ENCODE measurements at regions of chr7 and their contacts with region 1.

Region 1: GRCh38 chr7:85750454-85750949 is 563.6 kb upstream of the SEMA3D start:
- DNase-seq: peak in 1 of 9 donors; percentile 30
- ATAC-seq: peak; percentile 67
- H3K4me3 ChIP-seq: no peak overlapping the region
- H3K4me3 Mint-ChIP-seq: no peak overlapping the region
- H3K27ac ChIP-seq: no peak overlapping the region
- H3K27ac Mint-ChIP-seq: no peak overlapping the region
- H3K4me1 ChIP-seq: no peaks in the 10 kb centered on the region
- H3K4me1 Mint-ChIP-seq: no peaks in the 10 kb centered on the region
- H3K27me3 ChIP-seq: no peaks in the 10 kb centered on the region
- H3K27me3 Mint-ChIP-seq: no peaks in the 10 kb centered on the region

Region 2: GRCh38 chr7:85041605-85042216 is 708.8 kb before region 1 on chr7:
- CTCF ChIA-PET with region 1: no interaction called
- POLR2A ChIA-PET with region 1: no interaction called
- intact Hi-C with region 1: loop called in 1 of 2 experiments (anchors 5 kb)
- DNase-seq: peak in 2 of 9 donors; percentile 2 to 23
- ATAC-seq: no peak
- H3K4me3 ChIP-seq: no peak overlapping the region
- H3K4me3 Mint-ChIP-seq: no peak overlapping the region
- H3K27ac ChIP-seq: no peak overlapping the region
- H3K27ac Mint-ChIP-seq: no peak overlapping the region
- H3K4me1 ChIP-seq: no peaks in the 10 kb centered on the region
- H3K4me1 Mint-ChIP-seq: no peaks in the 10 kb centered on the region
- H3K27me3 ChIP-seq: no peaks in the 10 kb centered on the region
- H3K27me3 Mint-ChIP-seq: peaks cover 0 to 9% (median 0%) of the 10 kb centered on the region in 5 donors

Region 3: GRCh38 chr7:86149024-86149665 is 398.6 kb after region 1 on chr7:
- CTCF ChIA-PET with region 1: no interaction called
- POLR2A ChIA-PET with region 1: no interaction called
- intact Hi-C with region 1: no loop called
- DNase-seq: no peak
- ATAC-seq: no peak
- H3K4me3 ChIP-seq: no peak overlapping the region
- H3K4me3 Mint-ChIP-seq: no peak overlapping the region
- H3K27ac ChIP-seq: no peak overlapping the region
- H3K27ac Mint-ChIP-seq: no peak overlapping the region
- H3K4me1 ChIP-seq: no peaks in the 10 kb centered on the region
- H3K4me1 Mint-ChIP-seq: no peaks in the 10 kb centered on the region
- H3K27me3 ChIP-seq: no peaks in the 10 kb centered on the region
- H3K27me3 Mint-ChIP-seq: no peaks in the 10 kb centered on the region